ENCODE measurements at regions of chr13 and their contacts with region 1.

Region 1: DNA sequence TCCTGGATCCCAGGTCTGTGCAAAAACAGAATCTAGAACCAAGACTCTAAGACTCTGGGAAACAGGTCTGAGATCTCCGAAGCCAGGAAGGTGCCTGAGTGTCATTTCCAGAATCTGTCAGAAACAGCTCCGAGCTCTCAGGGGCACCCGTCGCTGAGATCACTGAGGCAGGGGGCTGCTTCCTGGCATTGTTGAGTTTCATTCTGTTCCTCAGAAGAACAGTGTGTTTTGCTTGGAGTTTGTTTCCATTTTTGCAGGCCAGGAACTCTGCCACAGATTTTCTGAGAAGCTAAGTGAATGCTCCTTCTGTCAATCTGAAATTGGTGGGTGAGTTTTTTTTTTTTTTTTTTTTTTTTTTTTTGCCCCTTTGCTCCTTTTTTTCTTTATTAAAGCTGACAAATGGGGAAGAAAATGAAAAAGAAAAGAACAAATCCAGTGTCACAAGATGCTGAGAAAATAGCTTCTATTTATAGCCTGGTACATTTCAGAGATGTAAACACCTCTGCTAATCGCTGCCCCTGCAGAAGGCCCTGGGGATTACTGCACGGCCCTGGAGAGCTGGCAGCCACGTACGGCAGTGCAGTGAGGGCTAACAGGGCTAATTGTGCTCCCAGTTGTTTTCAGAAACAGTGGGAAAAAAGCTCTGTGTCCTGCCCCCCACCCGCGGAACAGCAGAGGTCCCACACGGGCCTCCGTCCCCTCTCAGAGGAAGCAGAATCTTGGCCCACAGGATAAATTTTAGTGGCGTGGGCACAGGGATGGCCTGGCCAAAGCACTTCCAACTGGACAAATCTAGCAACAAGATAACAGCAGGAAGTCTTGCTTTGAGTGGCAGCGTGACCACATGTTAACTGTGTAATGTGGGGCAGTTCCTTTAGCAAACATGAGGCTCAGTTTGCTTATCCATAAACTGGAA is 237.6 kb upstream of the IRS2 start:
- DNase-seq: peak; percentile 78 to 84
- ATAC-seq: peak; percentile 91
- H3K4me3 ChIP-seq: no peak overlapping the region
- H3K27ac ChIP-seq: peak overlapping the region; percentile 93 to 95
- H3K4me1 ChIP-seq: peaks cover 7 to 8% of the 10 kb centered on the region in 2 donors
- H3K27me3 ChIP-seq: no peaks in the 10 kb centered on the region

Region 2: GRCh38 chr13:109869312-109870237 is 154.4 kb before region 1 on chr13:
- intact Hi-C with region 1: loop called in 1 of 2 experiments (anchors 5 kb)
- DNase-seq: peak; percentile 88 to 89
- ATAC-seq: peak; percentile 86
- H3K4me3 ChIP-seq: peak overlapping the region; percentile 19 to 28
- H3K27ac ChIP-seq: peak overlapping the region in 1 of 2 donors; percentile 73
- H3K4me1 ChIP-seq: peaks cover 0 to 3% of the 10 kb centered on the region in 2 donors
- H3K27me3 ChIP-seq: no peaks in the 10 kb centered on the region

Region 3: DNA sequence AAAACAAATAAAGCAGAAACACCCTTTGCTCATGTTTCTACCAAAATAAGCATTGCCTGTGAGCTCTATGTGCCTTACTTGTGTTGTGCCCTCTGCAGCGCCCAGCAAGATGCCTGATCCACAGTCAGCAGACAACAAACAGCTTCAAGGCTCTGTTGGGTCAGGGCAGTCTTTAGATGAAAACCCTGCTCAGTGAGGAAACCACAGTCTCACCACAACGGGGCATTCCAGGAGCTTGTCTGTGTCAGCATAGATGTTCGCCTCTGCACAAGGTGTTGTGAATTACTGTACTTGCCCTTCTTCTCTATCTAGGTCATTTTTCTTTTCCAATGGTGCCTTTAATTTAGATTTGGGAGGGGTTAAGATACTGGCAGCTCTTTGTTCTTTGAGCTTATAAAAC is 31.1 kb after region 1 on chr13:
- intact Hi-C with region 1: loop called in 1 of 2 experiments (anchors 5 kb)
- DNase-seq: no peak
- ATAC-seq: no peak
- H3K4me3 ChIP-seq: no peak overlapping the region
- H3K27ac ChIP-seq: no peak overlapping the region
- H3K4me1 ChIP-seq: no peaks in the 10 kb centered on the region
- H3K27me3 ChIP-seq: no peaks in the 10 kb centered on the region

Region 4: DNA sequence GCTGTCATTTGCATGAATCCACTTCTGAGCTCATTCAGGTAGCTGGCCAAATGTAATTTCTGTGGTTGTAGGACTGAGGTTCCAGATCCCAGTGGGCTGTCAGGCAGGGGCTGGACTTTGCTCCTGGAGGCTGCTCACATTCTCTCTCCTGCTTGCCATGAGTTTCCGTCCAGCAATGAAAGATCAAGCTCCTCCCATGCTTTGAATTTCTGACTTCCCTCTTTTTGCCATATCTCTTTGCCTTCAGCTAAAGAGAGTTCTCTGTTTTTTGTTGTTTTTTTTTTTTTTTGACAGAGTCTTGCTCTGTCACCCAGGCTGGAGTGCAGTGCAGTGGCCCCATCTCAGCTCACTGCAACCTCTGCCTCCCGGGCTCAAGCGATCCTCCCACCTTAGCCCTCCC is 766.4 kb after region 1 on chr13:
- intact Hi-C with region 1: no loop called
- DNase-seq: no peak
- ATAC-seq: no peak
- H3K4me3 ChIP-seq: no peak overlapping the region
- H3K27ac ChIP-seq: no peak overlapping the region
- H3K4me1 ChIP-seq: no peaks in the 10 kb centered on the region
- H3K27me3 ChIP-seq: peaks cover 0 to 2% of the 10 kb centered on the region in 2 donors